ENCODE measurements at regions of chr20 and their contacts with region 1.

Region 1: GRCh38 chr20:35463455-35464300 is 8.3 kb downstream of the CEP250 start:
- DNase-seq: peak; percentile 59 to 67 (median 64)
- H3K4me3 ChIP-seq: no peak overlapping the region
- H3K4me3 Mint-ChIP-seq: peak overlapping the region in 1 of 8 donors; percentile 15
- H3K27ac ChIP-seq: no peak overlapping the region
- H3K27ac Mint-ChIP-seq: peak overlapping the region in 2 of 7 donors; percentile 21 to 71
- H3K4me1 ChIP-seq: peaks cover 8% of the 10 kb centered on the region
- H3K4me1 Mint-ChIP-seq: peaks cover 4 to 8% (median 7%) of the 10 kb centered on the region in 4 donors
- H3K27me3 ChIP-seq: no peaks in the 10 kb centered on the region
- H3K27me3 Mint-ChIP-seq: no peaks in the 10 kb centered on the region

Region 2: GRCh38 chr20:35447082-35447789 is 16.4 kb before region 1 on chr20:
- CTCF ChIA-PET with region 1: interaction called, 26 read pairs
- POLR2A ChIA-PET with region 1: no interaction called
- intact Hi-C with region 1: no loop called
- DNase-seq: peak; percentile 80 to 84 (median 83)
- H3K4me3 ChIP-seq: peak overlapping the region in 1 of 2 donors; percentile 44
- H3K4me3 Mint-ChIP-seq: peak overlapping the region; percentile 80 to 94 (median 87)
- H3K27ac ChIP-seq: no peak overlapping the region
- H3K27ac Mint-ChIP-seq: peak overlapping the region in 4 of 7 donors; percentile 54 to 82 (median 76)
- H3K4me1 ChIP-seq: no peaks in the 10 kb centered on the region
- H3K4me1 Mint-ChIP-seq: peaks cover 0 to 3% (median 3%) of the 10 kb centered on the region in 4 donors
- H3K27me3 ChIP-seq: no peaks in the 10 kb centered on the region
- H3K27me3 Mint-ChIP-seq: peaks cover 3% of the 10 kb centered on the region in 2 donors

Region 3: DNA sequence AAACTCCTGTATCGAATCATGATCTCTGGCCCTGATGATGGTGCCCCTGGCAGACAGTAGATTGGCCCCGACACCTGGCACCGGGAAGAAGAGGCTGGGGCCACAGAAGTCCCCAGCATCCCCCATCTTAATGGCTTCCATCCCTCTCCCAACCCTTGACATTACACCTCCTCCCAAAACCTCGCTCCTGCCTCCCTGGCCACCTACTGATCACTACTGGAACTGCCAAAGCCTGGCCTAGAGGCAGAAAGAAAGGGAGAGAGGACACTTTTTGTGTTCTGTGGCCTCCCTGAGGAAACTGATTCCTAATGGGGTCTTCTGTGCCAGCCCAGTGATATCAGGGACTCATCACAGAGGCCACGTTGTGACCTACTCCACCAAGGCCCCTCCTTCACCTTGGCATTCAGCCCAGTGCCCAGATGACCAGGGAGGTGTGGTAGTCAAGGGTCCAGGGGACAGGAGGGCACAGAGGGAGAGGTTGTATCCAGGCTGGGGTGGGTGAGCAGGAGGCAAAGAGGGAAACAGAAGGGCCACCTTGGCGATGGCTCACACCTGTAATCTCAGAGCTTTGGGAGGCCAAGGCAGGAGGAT is 59.7 kb after region 1 on chr20:
- CTCF ChIA-PET with region 1: no interaction called
- POLR2A ChIA-PET with region 1: no interaction called
- intact Hi-C with region 1: loop called (anchors 1 kb)
- DNase-seq: peak in 2 of 5 donors; percentile 7 to 13
- H3K4me3 ChIP-seq: no peak overlapping the region
- H3K4me3 Mint-ChIP-seq: no peak overlapping the region
- H3K27ac ChIP-seq: no peak overlapping the region
- H3K27ac Mint-ChIP-seq: peak overlapping the region in 1 of 7 donors; percentile 42
- H3K4me1 ChIP-seq: no peaks in the 10 kb centered on the region
- H3K4me1 Mint-ChIP-seq: peaks cover 0 to 5% (median 0%) of the 10 kb centered on the region in 4 donors
- H3K27me3 ChIP-seq: no peaks in the 10 kb centered on the region
- H3K27me3 Mint-ChIP-seq: no peaks in the 10 kb centered on the region

Region 4: GRCh38 chr20:35699127-35699975 is 235.7 kb after region 1 on chr20 and contains the starts of genes NFS1 and ROMO1:
- CTCF ChIA-PET with region 1: no interaction called
- POLR2A ChIA-PET with region 1: no interaction called
- intact Hi-C with region 1: loop called (anchors 10 kb)
- DNase-seq: peak; percentile 82 to 88 (median 83)
- H3K4me3 ChIP-seq: peak within 1 kb of the TSS; percentile 90 to 92
- H3K4me3 Mint-ChIP-seq: peak within 1 kb of the TSS; percentile 92 to 99 (median 95)
- H3K27ac ChIP-seq: peak within 1 kb of the TSS; percentile 84
- H3K27ac Mint-ChIP-seq: peak within 1 kb of the TSS; percentile 93 to 99 (median 97)
- H3K4me1 ChIP-seq: peaks cover 38% of the 10 kb centered on the region
- H3K4me1 Mint-ChIP-seq: peaks cover 33 to 67% (median 42%) of the 10 kb centered on the region in 4 donors
- H3K27me3 ChIP-seq: no peaks in the 10 kb centered on the region
- H3K27me3 Mint-ChIP-seq: no peaks in the 10 kb centered on the region
- total RNA-seq, gene NFS1: 30.3 to 33.6 TPM
- total RNA-seq, gene ROMO1: 38.4 to 43.8 TPM

Region 5: GRCh38 chr20:36135159-36135558 is 671.5 kb after region 1 on chr20:
- CTCF ChIA-PET with region 1: interaction called, 4 read pairs
- POLR2A ChIA-PET with region 1: no interaction called
- intact Hi-C with region 1: loop called (anchors 5 kb)
- DNase-seq: no peak
- H3K4me3 ChIP-seq: no peak overlapping the region
- H3K4me3 Mint-ChIP-seq: no peak overlapping the region
- H3K27ac ChIP-seq: no peak overlapping the region
- H3K27ac Mint-ChIP-seq: no peak overlapping the region
- H3K4me1 ChIP-seq: no peaks in the 10 kb centered on the region
- H3K4me1 Mint-ChIP-seq: no peaks in the 10 kb centered on the region
- H3K27me3 ChIP-seq: no peaks in the 10 kb centered on the region
- H3K27me3 Mint-ChIP-seq: peaks cover 0 to 7% of the 10 kb centered on the region in 2 donors

Measured in CD4-positive, alpha-beta memory T cell (primary cell).